AG04449 (cell line): ENCODE measurements at regions of chr1 and their contacts with region 1.

Region 1: GRCh38 chr1:2174348-2175054 is 20.1 kb downstream of the FAAP20 start:
- DNase-seq: peak; percentile 5
- H3K4me3 ChIP-seq: no peak overlapping the region
- CTCF ChIP-seq: peak; percentile 97

Region 2: GRCh38 chr1:1959840-1960479 is 214.5 kb before region 1 on chr1:
- CTCF ChIA-PET with region 1: interaction called, 19 read pairs
- POLR2A ChIA-PET with region 1: no interaction called
- DNase-seq: no peak
- H3K4me3 ChIP-seq: no peak overlapping the region
- CTCF ChIP-seq: peak; percentile 84

Region 3: DNA sequence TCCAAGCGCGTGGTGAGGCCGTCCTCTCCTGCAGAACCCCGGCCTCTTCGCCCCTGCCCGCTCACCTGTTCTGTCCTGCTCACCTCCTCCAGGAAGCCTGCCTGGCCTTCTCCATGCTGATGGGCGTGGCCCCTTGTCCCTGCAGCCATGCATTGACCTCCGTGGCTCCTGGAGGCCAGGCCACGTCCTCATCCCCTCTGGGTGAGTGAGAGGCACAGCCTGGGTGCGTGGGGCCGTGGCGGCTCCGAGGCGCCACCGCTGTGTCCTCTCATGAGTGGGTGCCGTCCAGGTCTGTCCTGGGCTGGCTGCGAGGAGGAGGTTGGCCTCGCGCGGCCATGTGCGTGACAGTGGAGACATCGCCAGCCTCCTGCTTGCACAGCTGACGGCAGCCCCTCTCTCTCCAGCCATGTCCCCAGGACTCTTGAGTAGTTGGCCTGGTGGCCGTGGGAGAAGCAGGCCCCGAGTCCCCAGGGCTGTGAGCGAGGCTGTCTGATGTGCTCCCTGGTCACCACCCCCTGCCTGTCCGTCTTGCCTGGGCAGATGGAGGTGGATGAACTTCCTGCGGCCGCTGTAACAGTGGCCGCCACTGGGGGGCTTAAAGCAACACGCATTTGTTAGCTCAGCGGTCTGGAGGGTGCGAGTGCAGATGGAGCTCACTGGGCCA is 66.2 kb before region 1 on chr1:
- CTCF ChIA-PET with region 1: interaction called, 24 read pairs
- POLR2A ChIA-PET with region 1: no interaction called
- DNase-seq: no peak
- H3K4me3 ChIP-seq: no peak overlapping the region
- CTCF ChIP-seq: peak; percentile 63

Region 4: DNA sequence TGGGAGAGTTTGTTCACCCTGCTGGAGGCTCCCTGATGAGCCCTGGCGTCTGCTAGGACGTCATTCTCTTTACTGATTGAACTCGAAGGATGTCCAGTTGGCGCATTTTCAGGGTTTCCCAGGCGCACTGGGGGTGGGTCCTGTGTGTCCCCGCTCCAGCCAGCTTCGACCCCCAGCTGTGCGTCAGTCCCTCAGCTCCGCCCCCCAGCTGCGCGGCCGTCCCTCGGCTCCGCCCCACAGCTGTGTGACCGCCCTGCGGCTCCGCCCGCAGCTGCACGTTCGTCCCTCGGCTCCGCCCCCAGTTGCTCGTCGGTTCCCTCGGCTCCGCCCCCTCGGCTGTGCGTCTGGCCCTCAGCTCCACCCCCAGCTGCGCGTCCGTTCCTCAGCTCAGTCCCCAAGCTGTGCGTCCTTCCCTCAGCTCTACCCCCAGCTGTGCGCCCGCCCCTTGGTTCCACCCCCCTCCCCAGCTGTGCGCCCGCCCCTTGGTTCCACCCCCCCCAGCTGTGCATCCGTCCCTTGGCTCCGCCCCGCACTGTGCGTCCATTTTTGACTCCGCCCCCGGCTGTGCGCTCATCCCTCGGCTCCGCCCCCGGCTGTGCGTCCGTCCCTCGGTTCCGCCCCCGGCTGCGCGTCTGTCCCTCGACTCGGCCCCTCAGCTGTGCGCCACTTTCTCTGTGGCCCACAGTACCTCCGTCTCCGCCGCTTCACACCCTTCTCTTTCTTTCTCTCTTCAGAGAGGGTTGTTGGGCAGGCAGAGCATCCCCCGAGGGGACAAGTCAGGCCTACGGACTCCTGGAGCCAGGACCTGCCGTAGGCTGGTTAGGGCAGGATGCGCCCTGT is 41.2 kb before region 1 on chr1:
- CTCF ChIA-PET with region 1: interaction called, 28 read pairs
- POLR2A ChIA-PET with region 1: no interaction called
- DNase-seq: peak; percentile 84
- H3K4me3 ChIP-seq: peak overlapping the region; percentile 58
- CTCF ChIP-seq: no peak

Region 5: GRCh38 chr1:2163205-2163604 is 11.3 kb before region 1 on chr1:
- CTCF ChIA-PET with region 1: interaction called, 50 read pairs
- POLR2A ChIA-PET with region 1: no interaction called
- DNase-seq: no peak
- H3K4me3 ChIP-seq: no peak overlapping the region
- CTCF ChIP-seq: peak; percentile 2

Region 6: GRCh38 chr1:2194898-2195673 is 20.6 kb after region 1 on chr1:
- CTCF ChIA-PET with region 1: interaction called, 56 read pairs
- POLR2A ChIA-PET with region 1: no interaction called
- DNase-seq: no peak
- H3K4me3 ChIP-seq: peak overlapping the region; percentile 66
- CTCF ChIP-seq: peak; percentile 92